ENCODE measurements at regions of chr1 and their contacts with region 1.

Region 1: GRCh38 chr1:37602750-37603694 is 7.3 kb upstream of the GNL2 start:
- DNase-seq: peak; percentile 74
- H3K4me3 ChIP-seq: peak overlapping the region in 1 of 2 experiments; percentile 7; a peak in 1 of 4 replicates
- H3K27ac ChIP-seq: no peak overlapping the region
- H3K4me1 ChIP-seq: peaks cover 0 to 4% of the 10 kb centered on the region in 2 experiments; a peak in 1 of 4 replicates
- H3K27me3 ChIP-seq: peaks cover 15% of the 10 kb centered on the region; the same call in 1 of the 2 replicates
- CTCF ChIP-seq: peak; percentile 82
- EP300 ChIP-seq: no peak
- RAD21 ChIP-seq: peak; percentile 65

Region 2: DNA sequence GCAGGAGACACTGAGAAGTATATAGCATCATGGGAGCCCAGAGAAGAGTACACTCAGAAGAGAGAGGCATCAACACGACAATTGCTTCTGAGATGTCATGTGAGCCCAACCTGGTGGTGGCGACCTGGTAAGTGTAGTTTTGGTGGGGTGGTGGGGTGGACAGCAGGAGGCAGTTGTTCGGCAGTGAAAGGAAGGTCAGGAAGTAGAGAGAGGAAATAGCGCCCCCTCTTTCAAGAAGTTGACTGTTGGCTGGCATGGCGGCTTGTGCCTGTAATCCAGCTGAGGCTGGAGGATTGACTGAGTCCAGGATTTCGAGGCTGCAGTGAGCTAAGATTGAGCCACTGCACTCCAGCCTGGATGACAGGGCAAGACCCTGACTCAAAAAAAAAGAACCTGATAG is 19.1 kb after region 1 on chr1:
- CTCF ChIA-PET with region 1: interaction called, 62 read pairs
- POLR2A ChIA-PET with region 1: no interaction called
- DNase-seq: no peak
- H3K4me3 ChIP-seq: no peak overlapping the region
- H3K27ac ChIP-seq: no peak overlapping the region
- H3K4me1 ChIP-seq: no peaks in the 10 kb centered on the region
- H3K27me3 ChIP-seq: peaks cover 31% of the 10 kb centered on the region; the same call in 1 of the 2 replicates
- CTCF ChIP-seq: no peak
- EP300 ChIP-seq: no peak
- RAD21 ChIP-seq: no peak

Region 3: GRCh38 chr1:37634244-37634991 is 31.4 kb after region 1 on chr1 and contains the start of gene RSPO1:
- CTCF ChIA-PET with region 1: interaction called, 13 read pairs
- POLR2A ChIA-PET with region 1: no interaction called
- DNase-seq: peak; percentile 91
- H3K4me3 ChIP-seq: peak within 1 kb of the TSS in 1 of 2 experiments; percentile 29; a peak in 3 of 4 replicates
- H3K27ac ChIP-seq: no peak within 1 kb of the TSS
- H3K4me1 ChIP-seq: no peaks in the 10 kb centered on the region; a peak in 1 of 4 replicates
- H3K27me3 ChIP-seq: peaks cover 78% of the 10 kb centered on the region
- CTCF ChIP-seq: no peak
- EP300 ChIP-seq: no peak
- RAD21 ChIP-seq: no peak
- polyA plus RNA-seq, gene RSPO1: 0.03 TPM in 1 of 2 replicates, not detected in the other

Region 4: GRCh38 chr1:37667023-37667761 is 64.2 kb after region 1 on chr1:
- CTCF ChIA-PET with region 1: interaction called, 56 read pairs
- POLR2A ChIA-PET with region 1: no interaction called
- DNase-seq: peak; percentile 65
- H3K4me3 ChIP-seq: no peak overlapping the region
- H3K27ac ChIP-seq: no peak overlapping the region
- H3K4me1 ChIP-seq: peaks cover 0 to 11% of the 10 kb centered on the region in 2 experiments; a peak in 1 of 4 replicates
- H3K27me3 ChIP-seq: 0 out of 2 replicates have a peak, but pooled peaks cover 13% of the 10 kb centered on the region
- CTCF ChIP-seq: no peak
- EP300 ChIP-seq: no peak
- RAD21 ChIP-seq: peak; percentile 26; the same call in 1 of the 2 replicates

Region 5: GRCh38 chr1:37682334-37682987 is 79.4 kb after region 1 on chr1:
- CTCF ChIA-PET with region 1: interaction called, 358 read pairs
- POLR2A ChIA-PET with region 1: interaction called, 3 read pairs
- DNase-seq: peak; percentile 63
- H3K4me3 ChIP-seq: peak overlapping the region in 1 of 2 experiments; percentile 28; a peak in 1 of 4 replicates
- H3K27ac ChIP-seq: no peak overlapping the region
- H3K4me1 ChIP-seq: 0 out of 4 replicates have a peak, but pooled peaks cover 0 to 2% of the 10 kb centered on the region in 2 experiments
- H3K27me3 ChIP-seq: no peaks in the 10 kb centered on the region
- CTCF ChIP-seq: peak; percentile 95
- EP300 ChIP-seq: no peak
- RAD21 ChIP-seq: peak; percentile 92

Region 6: DNA sequence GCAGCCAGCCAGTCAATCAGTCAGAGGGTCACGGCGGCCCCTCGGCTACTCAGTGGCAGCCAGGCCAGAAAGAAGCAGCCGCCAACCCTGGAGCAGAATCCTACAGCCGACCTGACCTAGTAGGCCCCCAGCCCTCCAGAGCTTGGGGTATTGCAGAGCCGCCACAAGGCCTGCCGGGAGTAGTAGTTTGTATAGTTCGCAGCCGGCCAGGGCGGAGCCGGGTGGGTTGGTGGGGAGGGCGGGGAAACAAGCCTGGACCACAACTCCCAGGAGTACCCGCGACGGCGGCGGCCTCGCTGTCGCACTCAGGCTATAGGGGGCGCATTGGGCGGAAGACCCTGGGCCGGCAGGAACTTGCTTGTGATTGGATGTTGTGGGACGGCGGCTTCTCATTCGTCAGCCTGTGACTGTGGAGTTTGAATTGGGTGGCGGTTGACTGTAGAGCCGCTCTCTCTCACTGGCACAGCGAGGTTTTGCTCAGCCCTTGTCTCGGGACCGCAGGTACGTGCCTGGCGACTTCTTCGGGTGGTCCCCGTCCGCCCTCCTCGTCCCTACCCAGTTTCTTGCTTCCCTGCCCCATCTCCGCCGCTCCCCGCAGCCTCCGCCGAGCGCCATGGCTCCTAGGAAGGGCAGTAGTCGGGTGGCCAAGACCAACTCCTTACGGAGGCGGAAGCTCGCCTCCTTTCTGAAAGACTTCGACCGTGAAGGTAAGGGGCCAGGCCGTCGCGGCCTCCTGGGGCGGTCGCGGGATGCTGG is 89.2 kb after region 1 on chr1 and contains the start of gene CDCA8:
- CTCF ChIA-PET with region 1: interaction called, 358 read pairs
- POLR2A ChIA-PET with region 1: no interaction called
- DNase-seq: peak; percentile 98
- H3K4me3 ChIP-seq: peak within 1 kb of the TSS; percentile 88 to 98
- H3K27ac ChIP-seq: peak within 1 kb of the TSS; percentile 50 to 53; a peak in 2 of 4 replicates
- H3K4me1 ChIP-seq: peaks cover 16 to 20% of the 10 kb centered on the region in 2 experiments; a peak in 2 of 4 replicates
- H3K27me3 ChIP-seq: no peaks in the 10 kb centered on the region
- CTCF ChIP-seq: peak; percentile 62
- EP300 ChIP-seq: no peak
- RAD21 ChIP-seq: no peak
- polyA plus RNA-seq, gene CDCA8: 18.9 and 22.9 TPM in 2 replicates

Measured in SK-N-SH (cell line).